ENCODE measurements at regions of chr4 and their contacts with region 1.

Region 1: GRCh38 chr4:138035781-138036258 is 206.3 kb downstream of the SLC7A11 start:
- DNase-seq: peak; percentile 81
- ATAC-seq: peak; percentile 83
- H3K4me3 ChIP-seq: no peak overlapping the region
- H3K27ac ChIP-seq: peak overlapping the region; percentile 64
- H3K4me1 ChIP-seq: peaks cover 22% of the 10 kb centered on the region
- H3K27me3 ChIP-seq: no peaks in the 10 kb centered on the region
- CTCF ChIP-seq: peak; percentile 81
- POLR2A ChIP-seq: no peak
- RAD21 ChIP-seq: peak; percentile 89

Region 2: DNA sequence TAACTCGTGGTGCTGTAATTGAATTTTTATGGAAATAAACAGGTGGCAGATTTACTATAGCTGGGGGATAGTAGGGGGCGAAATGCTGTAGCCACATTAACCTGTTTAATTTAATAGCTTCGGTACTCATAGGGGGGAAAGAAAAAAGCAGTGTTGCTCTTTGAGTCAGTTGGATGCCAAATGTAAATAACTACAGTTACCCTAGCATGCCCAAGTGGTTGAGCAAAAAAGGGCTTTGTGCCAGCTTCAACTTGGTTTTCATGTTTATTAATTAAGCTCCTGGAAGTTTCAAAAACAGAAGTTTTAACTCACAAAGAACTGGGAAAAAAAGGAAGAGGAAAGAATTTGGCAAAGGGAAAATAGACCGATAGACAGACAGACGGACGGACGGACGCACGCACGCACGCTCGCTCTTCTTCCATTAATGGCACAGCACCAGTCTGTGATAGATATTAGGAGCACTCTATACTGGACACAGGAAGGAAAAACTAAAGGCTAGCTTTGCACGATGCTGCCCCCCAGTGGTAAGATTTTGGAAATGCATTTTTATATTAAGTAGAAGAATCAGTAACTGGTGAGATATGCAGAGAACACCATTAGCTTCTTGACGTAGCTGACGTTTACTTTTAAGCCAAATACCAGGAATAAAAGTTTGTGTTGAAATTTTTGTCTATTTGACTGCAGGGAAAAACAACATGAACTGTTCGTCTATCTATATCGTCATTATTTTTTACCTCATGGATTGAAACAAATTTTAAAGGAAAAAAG is 54.5 kb after region 1 on chr4:
- CTCF ChIA-PET with region 1: interaction called, 27 read pairs
- POLR2A ChIA-PET with region 1: interaction called, 3 read pairs
- dilution Hi-C with region 1: no loop called
- in situ Hi-C with region 1: loop called (anchors 5 kb)
- intact Hi-C with region 1: loop called (anchors 1 kb)
- DNase-seq: peak; percentile 83
- ATAC-seq: peak; percentile 96
- H3K4me3 ChIP-seq: peak overlapping the region; percentile 34
- H3K27ac ChIP-seq: peak overlapping the region; percentile 57
- H3K4me1 ChIP-seq: 0 out of 2 replicates have a peak, but pooled peaks cover 2% of the 10 kb centered on the region
- H3K27me3 ChIP-seq: no peaks in the 10 kb centered on the region
- CTCF ChIP-seq: peak; percentile 87
- POLR2A ChIP-seq: no peak
- RAD21 ChIP-seq: peak; percentile 93

Region 3: DNA sequence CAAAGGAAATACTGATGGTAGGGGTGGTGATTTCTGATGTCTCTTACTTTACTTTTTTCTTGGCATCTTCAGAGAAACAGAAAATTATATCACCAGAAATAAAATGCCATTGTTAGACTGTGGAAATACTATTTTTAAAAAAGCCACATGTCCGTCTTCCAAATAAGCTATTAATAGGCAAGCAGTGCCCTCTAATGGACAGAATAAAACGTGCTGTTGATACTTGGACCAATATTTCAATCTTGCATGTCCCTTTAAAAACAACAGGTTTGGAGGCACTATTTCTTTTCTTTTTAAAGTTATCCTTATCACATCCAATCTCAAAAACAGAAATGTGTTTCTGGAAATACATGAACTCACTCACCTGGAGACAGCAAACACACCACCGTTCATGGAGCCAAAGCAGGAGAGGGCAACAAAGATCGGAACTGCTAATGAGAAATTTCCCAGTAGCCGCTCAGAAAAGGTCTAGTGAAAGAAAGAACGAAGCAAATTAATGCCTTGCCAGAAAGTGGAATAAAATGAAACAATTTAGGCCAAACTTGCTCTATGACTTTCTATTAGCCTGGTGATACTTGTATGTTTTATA is 147.1 kb after region 1 on chr4:
- CTCF ChIA-PET with region 1: interaction called, 5 read pairs
- POLR2A ChIA-PET with region 1: no interaction called
- dilution Hi-C with region 1: no loop called
- in situ Hi-C with region 1: loop called (anchors 10 kb)
- intact Hi-C with region 1: loop called (anchors 2 kb)
- DNase-seq: peak; percentile 72
- ATAC-seq: peak; percentile 31; the same call in 1 of the 2 replicates
- H3K4me3 ChIP-seq: no peak overlapping the region
- H3K27ac ChIP-seq: no peak overlapping the region
- H3K4me1 ChIP-seq: peaks cover 4% of the 10 kb centered on the region; the same call in 1 of the 2 replicates
- H3K27me3 ChIP-seq: no peaks in the 10 kb centered on the region
- CTCF ChIP-seq: peak; percentile 76
- POLR2A ChIP-seq: no peak
- RAD21 ChIP-seq: peak; percentile 76

Region 4: GRCh38 chr4:138576684-138577083 is 540.9 kb after region 1 on chr4:
- CTCF ChIA-PET with region 1: no interaction called
- POLR2A ChIA-PET with region 1: no interaction called
- dilution Hi-C with region 1: no loop called
- in situ Hi-C with region 1: no loop called
- intact Hi-C with region 1: loop called (anchors 2 kb)
- DNase-seq: peak; percentile 68
- ATAC-seq: peak; percentile 82
- H3K4me3 ChIP-seq: no peak overlapping the region
- H3K27ac ChIP-seq: no peak overlapping the region
- H3K4me1 ChIP-seq: no peaks in the 10 kb centered on the region
- H3K27me3 ChIP-seq: no peaks in the 10 kb centered on the region
- CTCF ChIP-seq: peak; percentile 55
- POLR2A ChIP-seq: no peak
- RAD21 ChIP-seq: peak; percentile 82

Region 5: DNA sequence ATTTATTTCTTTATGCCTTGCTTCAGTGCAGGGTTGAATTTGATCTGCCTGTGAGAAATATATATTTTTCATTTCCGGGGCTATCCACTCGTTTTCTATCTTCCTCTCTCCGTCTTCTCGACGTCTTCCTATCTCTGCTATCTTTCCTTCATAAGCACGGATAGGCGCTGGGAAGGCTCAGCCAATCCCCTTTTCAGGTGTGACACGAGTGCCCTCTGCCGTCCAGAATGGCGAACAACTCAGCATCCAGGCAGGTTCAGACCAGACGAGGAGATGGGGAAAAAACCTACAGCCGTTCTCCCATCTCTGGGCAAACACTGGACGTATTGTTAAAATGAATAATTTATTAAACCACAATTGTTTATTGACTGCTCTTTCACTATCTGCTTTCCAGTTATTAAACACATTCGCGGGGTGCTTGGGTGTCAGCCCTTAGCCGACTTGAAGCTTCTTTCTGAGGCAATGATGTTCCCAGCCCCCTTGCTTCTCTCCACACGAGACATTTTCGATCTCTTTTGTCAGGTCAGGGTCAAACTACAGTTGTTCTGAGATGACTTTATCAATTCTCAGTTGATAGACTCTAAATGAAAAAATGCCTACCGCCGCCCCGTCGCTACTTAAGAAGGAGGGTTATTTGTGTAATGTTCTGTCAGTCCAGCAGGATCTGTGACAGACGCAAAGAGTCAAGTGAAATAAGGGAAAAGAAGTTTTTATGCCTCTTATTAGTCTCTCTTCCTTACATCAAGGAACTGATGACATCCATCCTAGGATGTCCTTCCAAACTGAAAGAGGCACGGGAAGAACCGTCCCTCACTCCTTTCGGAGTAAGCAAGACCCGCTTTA is 883.5 kb after region 1 on chr4:
- CTCF ChIA-PET with region 1: no interaction called
- POLR2A ChIA-PET with region 1: no interaction called
- dilution Hi-C with region 1: no loop called
- in situ Hi-C with region 1: no loop called
- intact Hi-C with region 1: loop called (anchors 1 kb)
- DNase-seq: peak; percentile 82
- ATAC-seq: peak; percentile 100
- H3K4me3 ChIP-seq: no peak overlapping the region
- H3K27ac ChIP-seq: no peak overlapping the region
- H3K4me1 ChIP-seq: no peaks in the 10 kb centered on the region
- H3K27me3 ChIP-seq: peaks cover 2% of the 10 kb centered on the region; the same call in 1 of the 2 replicates
- CTCF ChIP-seq: peak; percentile 84
- POLR2A ChIP-seq: 0 out of 2 replicates have a peak, but pooled peaks have one; percentile 25
- RAD21 ChIP-seq: peak; percentile 93